HCT116 (cell line): ENCODE measurements at regions of chr16 and their contacts with region 1.

Region 1: GRCh38 chr16:24729362-24729984 is at the start of gene TNRC6A:
- DNase-seq: peak; percentile 62
- ATAC-seq: peak; percentile 92
- H3K4me3 ChIP-seq: peak within 1 kb of the TSS; percentile 77 to 92
- H3K27ac ChIP-seq: peak within 1 kb of the TSS; percentile 83
- H3K4me1 ChIP-seq: peaks cover 10 to 15% of the 10 kb centered on the region in 2 experiments
- H3K27me3 ChIP-seq: no peaks in the 10 kb centered on the region
- CTCF ChIP-seq: no peak
- POLR2A ChIP-seq: no peak
- RAD21 ChIP-seq: 0 out of 2 replicates have a peak, but pooled peaks have one; percentile 2
- total RNA-seq, gene TNRC6A: 37.0 TPM

Region 2: DNA sequence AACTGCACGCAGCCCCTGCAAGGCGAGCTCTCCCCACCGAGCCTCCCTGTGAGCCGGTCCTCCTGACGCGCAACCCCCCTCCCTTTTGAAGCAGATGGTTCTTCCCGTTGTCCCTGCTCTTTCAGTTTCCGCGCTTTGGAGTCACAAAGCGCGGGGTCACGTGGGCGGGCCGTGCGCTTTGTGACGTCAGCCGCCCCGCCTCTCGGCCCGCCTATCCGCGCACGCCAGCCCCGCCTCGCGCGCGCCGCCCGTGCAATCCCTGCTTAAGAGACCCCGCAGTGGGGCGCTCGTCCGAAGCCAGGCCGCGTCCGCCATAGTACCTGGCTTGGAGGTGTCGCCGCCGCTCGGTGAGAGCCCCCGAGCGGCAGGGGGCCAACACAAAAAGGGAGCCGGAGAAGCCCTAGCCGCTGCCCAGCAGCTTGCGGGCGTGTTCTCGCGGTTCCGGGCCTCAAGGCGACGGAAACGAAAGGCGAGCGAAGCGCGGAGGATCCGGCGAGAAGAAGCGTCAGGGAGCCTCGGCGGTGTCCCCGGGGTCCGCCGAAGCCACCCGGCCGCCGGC is 190.1 kb before region 1 on chr16 and contains the start of gene RBBP6:
- CTCF ChIA-PET with region 1: no interaction called
- POLR2A ChIA-PET with region 1: no interaction called
- RAD21 ChIA-PET with region 1: no interaction called
- intact Hi-C with region 1: loop called (anchors 5 kb)
- DNase-seq: peak; percentile 93
- ATAC-seq: peak; percentile 88
- H3K4me3 ChIP-seq: peak within 1 kb of the TSS; percentile 66 to 80
- H3K27ac ChIP-seq: peak within 1 kb of the TSS; percentile 95
- H3K4me1 ChIP-seq: peaks cover 22 to 33% of the 10 kb centered on the region in 2 experiments
- H3K27me3 ChIP-seq: no peaks in the 10 kb centered on the region
- CTCF ChIP-seq: peak; percentile 9 to 21 (median 11); a peak in 2 of 6 replicates
- POLR2A ChIP-seq: peak; percentile 94
- RAD21 ChIP-seq: no peak
- total RNA-seq, gene RBBP6: 52.4 TPM

Region 3: GRCh38 chr16:24670623-24671454 is 58.6 kb before region 1 on chr16:
- CTCF ChIA-PET with region 1: no interaction called
- POLR2A ChIA-PET with region 1: no interaction called
- RAD21 ChIA-PET with region 1: no interaction called
- intact Hi-C with region 1: loop called (anchors 10 kb)
- DNase-seq: no peak
- ATAC-seq: no peak
- H3K4me3 ChIP-seq: no peak overlapping the region
- H3K27ac ChIP-seq: no peak overlapping the region
- H3K4me1 ChIP-seq: peaks cover 5 to 14% of the 10 kb centered on the region in 2 experiments
- H3K27me3 ChIP-seq: no peaks in the 10 kb centered on the region
- CTCF ChIP-seq: no peak
- POLR2A ChIP-seq: no peak
- RAD21 ChIP-seq: no peak